Activated CD8-positive, alpha-beta memory T cell treated with anti-CD3 and anti-CD28 coated beads, Interleukin-2, amount 10 ng/mL, durations not matched to agents 7 days and 5 days (primary cell): ENCODE measurements at regions of chr6 and their contacts with region 1.

Region 1: DNA sequence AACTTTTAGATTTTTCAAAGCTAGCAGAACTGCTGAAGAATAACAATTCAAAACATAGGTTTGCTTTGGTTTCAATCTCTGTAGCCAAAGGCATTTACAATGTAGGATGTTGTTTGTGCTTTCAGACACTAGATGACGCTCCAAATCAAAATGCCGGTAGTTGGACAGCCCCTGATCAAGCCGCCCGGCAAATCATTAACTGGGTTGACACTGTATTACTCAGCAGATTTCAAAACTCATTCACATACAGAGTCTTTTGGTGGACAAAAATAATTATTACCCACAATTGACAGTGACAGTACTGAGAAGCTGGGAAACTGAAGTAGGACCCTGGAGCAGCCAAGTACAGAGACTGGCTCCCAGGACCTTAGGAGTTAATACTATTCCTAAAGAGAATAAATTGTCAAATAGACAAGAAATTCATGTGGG is 21.3 kb upstream of the HFE start:
- DNase-seq: peak; percentile 70
- ATAC-seq: peak; percentile 90
- H3K4me3 Mint-ChIP-seq: no peak overlapping the region
- H3K27ac Mint-ChIP-seq: no peak overlapping the region
- H3K4me1 Mint-ChIP-seq: peaks cover 9% of the 10 kb centered on the region
- H3K27me3 Mint-ChIP-seq: peaks cover 26% of the 10 kb centered on the region

Region 2: GRCh38 chr6:25934735-25935306 is 131.1 kb before region 1 on chr6:
- CTCF ChIA-PET with region 1: no interaction called
- DNase-seq: no peak
- ATAC-seq: no peak
- H3K4me3 Mint-ChIP-seq: no peak overlapping the region
- H3K27ac Mint-ChIP-seq: no peak overlapping the region
- H3K4me1 Mint-ChIP-seq: no peaks in the 10 kb centered on the region
- H3K27me3 Mint-ChIP-seq: peaks cover 4% of the 10 kb centered on the region

Region 3: GRCh38 chr6:26087284-26088115 is 21.5 kb after region 1 on chr6 and contains the start of gene HFE:
- CTCF ChIA-PET with region 1: interaction called, 566 read pairs
- DNase-seq: peak; percentile 51
- ATAC-seq: peak; percentile 57
- H3K4me3 Mint-ChIP-seq: peak within 1 kb of the TSS; percentile 82
- H3K27ac Mint-ChIP-seq: peak within 1 kb of the TSS; percentile 78
- H3K4me1 Mint-ChIP-seq: peaks cover 35% of the 10 kb centered on the region
- H3K27me3 Mint-ChIP-seq: peaks cover 7% of the 10 kb centered on the region
- total RNA-seq, gene HFE: 1.6 to 3.4 TPM

Region 4: DNA sequence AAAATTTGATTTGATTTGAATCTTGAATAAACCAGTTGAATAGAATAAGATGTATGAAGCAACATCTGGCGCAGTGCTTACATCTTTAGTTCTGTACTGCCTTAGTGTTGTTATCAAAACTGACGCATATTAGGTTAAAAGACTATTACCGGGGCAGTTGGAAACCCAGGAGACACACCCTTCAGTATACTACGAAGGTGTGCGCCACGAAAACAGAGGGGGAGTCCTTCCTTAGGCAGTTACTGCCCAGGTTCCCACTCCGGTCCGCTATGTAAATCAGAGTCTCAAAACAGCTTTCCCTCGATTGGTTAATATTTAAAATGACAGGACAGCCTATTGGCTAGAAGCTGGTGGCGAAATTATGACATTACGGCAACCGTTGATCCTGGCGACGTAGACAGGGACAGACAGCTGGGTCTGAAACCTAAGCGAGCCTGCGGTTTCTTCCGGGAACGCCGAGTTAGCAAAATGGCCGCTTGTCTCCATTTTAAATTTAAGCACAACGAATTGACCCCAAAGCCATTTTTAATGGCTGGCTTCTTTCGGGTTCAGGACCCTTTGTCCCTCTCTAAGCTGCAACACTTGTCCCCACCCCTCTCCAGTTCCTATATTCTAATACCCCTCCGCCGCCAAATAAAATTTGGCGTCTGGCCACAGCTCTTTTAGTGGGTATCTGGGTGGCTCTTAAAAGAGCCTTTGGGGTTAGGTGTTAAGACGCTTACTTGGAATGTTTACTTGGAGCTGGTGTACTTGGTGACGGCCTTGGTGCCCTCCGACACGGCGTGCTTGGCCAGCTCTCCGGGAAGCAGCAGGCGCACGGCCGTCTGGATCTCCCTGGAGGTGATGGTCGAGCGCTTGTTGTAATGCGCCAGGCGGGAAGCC is 57.1 kb after region 1 on chr6:
- CTCF ChIA-PET with region 1: interaction called, 10 read pairs
- DNase-seq: peak; percentile 98
- ATAC-seq: peak; percentile 48
- H3K4me3 Mint-ChIP-seq: peak overlapping the region; percentile 99
- H3K27ac Mint-ChIP-seq: peak overlapping the region; percentile 100
- H3K4me1 Mint-ChIP-seq: peaks cover 40% of the 10 kb centered on the region
- H3K27me3 Mint-ChIP-seq: peaks cover 13% of the 10 kb centered on the region

Region 5: DNA sequence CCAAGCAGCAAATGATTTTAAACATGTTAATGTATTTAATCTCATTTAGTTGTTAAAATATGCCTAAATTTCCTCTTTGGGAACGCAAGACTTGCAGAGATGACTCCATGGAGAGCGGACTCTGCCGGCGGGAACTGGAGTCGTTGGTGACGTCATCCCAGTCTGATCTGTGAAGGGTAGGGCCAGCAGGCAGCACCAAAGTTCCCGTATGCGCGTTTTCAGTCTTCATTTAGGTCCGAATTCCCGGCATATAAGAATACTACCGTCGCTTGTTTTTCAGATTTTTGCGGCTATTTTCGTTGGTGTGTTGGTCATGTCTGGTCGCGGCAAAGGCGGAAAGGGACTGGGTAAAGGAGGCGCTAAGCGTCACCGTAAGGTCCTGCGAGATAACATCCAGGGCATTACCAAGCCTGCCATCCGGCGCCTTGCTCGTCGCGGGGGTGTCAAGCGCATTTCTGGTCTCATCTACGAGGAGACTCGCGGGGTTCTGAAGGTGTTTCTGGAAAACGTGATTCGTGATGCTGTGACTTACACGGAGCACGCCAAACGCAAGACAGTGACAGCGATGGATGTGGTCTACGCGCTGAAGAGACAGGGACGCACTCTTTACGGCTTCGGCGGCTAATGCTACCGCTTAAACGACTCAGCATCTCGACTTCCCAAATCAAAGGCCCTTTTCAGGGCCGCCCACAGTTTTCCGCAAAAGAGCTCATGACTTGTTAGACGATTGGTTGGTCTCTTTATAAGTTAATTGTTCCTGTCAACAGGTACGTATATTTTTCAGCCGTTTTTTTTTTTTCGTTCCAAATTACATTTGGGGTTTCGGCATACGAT is 138.6 kb after region 1 on chr6:
- CTCF ChIA-PET with region 1: no interaction called
- DNase-seq: peak; percentile 96
- ATAC-seq: peak; percentile 67
- H3K4me3 Mint-ChIP-seq: no peak overlapping the region
- H3K27ac Mint-ChIP-seq: no peak overlapping the region
- H3K4me1 Mint-ChIP-seq: peaks cover 38% of the 10 kb centered on the region
- H3K27me3 Mint-ChIP-seq: no peaks in the 10 kb centered on the region